Heart left ventricle (tissue), 16 donors: ENCODE measurements at regions of chr12 and their contacts with region 1.

Region 1: DNA sequence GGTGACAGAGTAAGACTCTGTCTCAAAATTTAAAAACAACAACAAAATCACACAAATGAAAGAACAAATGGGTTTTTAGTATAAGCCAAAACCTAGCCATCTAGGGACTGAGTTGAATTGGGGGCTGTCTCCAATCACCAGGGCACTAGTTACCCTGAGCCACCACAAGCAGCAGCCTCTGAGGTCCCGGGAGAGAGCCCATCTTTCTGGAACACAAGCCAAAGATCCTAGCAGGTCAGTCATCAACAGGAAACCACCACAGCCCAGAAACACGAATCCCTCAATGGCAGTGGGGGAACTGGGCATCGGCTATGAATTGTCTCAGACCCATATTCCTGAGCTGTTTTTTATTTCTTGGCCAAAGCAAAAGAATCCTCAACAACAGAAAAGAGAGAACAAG is 75.3 kb downstream of the KDM2B start:
- DNase-seq: no peak
- ATAC-seq: no peak
- H3K4me3 ChIP-seq: no peak overlapping the region
- H3K27ac ChIP-seq: no peak overlapping the region
- H3K4me1 ChIP-seq: peaks cover 0 to 12% (median 4%) of the 10 kb centered on the region in 12 donors
- H3K27me3 ChIP-seq: no peaks in the 10 kb centered on the region
- CTCF ChIP-seq: no peak
- POLR2A ChIP-seq: no peak

Region 2: DNA sequence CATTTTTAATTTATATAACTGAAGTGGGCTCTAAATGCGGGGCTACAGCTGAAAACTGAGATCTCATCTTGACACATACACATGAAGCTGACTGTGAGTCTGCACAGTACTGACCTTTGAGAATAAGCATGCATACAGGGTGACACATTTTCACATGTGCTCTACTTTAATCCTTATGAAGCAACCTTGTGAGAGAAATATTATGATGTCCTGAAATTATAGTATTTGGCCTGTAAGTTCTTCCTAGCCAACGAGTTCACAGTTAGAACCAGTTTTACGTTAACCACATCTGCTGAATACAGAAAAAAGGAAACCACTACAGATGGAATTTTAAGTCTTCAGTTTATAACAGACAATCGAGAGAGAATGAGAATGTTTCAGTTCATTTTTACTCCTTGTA is 671.7 kb before region 1 on chr12:
- intact Hi-C with region 1: no loop called
- DNase-seq: no peak
- ATAC-seq: peak in 2 of 4 donors; percentile 53 to 57
- H3K4me3 ChIP-seq: no peak overlapping the region
- H3K27ac ChIP-seq: peak overlapping the region in 4 of 12 donors; percentile 15 to 49 (median 38)
- H3K4me1 ChIP-seq: peaks cover 0 to 84% (median 55%) of the 10 kb centered on the region in 12 donors
- H3K27me3 ChIP-seq: no peaks in the 10 kb centered on the region
- CTCF ChIP-seq: no peak
- POLR2A ChIP-seq: no peak

Region 3: DNA sequence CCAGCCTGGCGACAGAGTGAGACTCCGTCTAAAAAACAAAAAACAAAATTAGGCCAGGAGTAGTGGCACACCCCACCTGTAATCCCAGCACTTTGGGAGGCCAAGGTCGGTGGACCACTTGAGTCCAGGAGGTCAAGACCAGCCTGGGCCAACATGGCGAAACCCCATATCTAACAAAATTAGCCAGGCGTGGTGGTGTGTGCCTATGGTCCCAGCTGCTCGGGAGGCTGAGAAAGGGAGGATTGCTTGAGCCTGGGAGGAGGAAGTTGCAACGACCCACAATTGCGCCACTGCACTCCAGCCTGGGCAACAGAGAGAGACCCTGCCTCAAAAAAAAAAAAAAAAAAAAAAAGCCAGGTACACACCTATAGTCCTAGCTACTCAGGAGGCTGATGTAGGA is 38.3 kb after region 1 on chr12:
- intact Hi-C with region 1: loop called in 1 of 10 experiments (anchors 5 kb)
- DNase-seq: no peak
- ATAC-seq: no peak
- H3K4me3 ChIP-seq: no peak overlapping the region
- H3K27ac ChIP-seq: no peak overlapping the region
- H3K4me1 ChIP-seq: peaks cover 0 to 15% (median 0%) of the 10 kb centered on the region in 12 donors
- H3K27me3 ChIP-seq: no peaks in the 10 kb centered on the region
- CTCF ChIP-seq: no peak
- POLR2A ChIP-seq: no peak